ENCODE measurements at regions of chr5 and their contacts with region 1.

Region 1: DNA sequence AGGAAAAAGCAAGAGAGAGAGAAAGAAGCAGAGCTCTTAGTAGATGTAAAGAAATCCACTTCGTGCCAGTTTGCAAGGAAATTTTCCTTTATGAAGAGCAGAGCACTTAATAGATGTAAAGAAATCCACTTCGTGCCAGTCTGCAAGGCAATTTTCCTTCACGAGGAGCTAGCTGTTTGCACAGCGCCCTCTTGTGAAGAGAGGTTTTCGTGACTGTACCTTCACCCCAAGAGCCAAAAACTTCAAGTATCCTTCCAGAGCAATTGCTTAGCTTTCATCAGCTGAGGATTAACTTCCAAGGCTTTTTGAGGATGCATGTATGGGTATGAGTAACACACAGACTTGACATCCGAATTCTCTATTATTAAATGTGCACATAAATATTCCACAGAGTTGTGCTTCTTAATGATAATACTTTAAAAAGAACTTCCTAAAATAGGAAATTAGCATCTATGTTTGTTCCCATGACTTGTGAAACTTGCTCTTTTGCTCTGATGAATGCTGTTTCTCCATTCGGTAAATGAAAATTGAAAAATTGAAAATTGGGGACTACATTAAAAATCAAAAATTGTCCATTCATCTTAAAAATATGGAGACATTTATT is 525.6 kb downstream of the PDE4D start:
- DNase-seq: peak in 4 of 5 donors; percentile 34 to 68 (median 59)
- ATAC-seq: peak; percentile 48 to 79 (median 71)
- H3K4me3 ChIP-seq: no peak overlapping the region
- H3K27ac ChIP-seq: no peak overlapping the region
- H3K4me1 ChIP-seq: peaks cover 0 to 12% (median 0%) of the 10 kb centered on the region in 12 donors
- H3K27me3 ChIP-seq: no peaks in the 10 kb centered on the region
- CTCF ChIP-seq: peak; percentile 65 to 86 (median 80)
- POLR2A ChIP-seq: no peak

Region 2: DNA sequence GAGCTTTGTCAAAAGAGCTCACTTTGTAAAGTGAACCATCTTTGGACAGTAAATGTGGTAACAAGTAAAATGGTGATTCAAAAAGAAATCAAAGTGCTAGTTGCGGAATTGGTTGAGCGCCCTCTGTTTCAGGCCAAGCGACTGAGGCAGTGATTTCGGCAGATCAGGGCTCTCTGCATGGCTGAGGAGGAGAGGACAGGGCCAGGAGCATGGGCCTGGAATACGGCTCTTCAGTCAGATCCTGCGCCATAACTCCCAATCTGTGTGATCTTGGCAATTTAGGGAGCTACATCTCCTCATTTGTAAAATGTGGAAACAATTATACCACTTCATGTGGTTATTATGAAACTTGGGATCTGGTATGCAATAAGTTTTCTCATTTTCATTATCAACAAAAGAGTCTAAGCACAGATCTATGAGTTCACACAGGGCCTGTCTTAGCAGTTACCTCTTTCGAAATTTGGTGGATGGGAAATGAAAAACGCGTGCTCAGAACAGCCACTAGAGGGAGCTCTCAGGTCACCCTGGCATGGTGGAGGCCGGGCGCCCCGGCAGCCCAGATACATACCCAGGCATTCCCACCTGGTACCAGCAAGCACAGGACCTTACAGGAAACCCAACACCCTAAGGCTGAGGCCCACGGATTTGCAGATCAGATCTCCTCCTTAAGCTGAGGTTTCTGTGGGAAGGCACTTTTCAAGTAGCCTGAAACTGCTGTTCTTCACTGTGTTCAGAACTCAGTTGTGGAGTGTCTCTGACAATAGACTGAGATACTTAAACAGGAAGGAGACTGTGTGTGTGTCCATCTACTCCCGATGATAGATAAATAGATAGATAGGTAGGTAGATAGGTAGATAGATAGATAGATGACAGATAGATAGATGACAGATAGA is 481.3 kb before region 1 on chr5:
- intact Hi-C with region 1: loop called in 5 of 10 experiments (anchors 5 to 10 kb)
- DNase-seq: peak; percentile 39 to 72 (median 58)
- ATAC-seq: peak; percentile 45 to 76 (median 60)
- H3K4me3 ChIP-seq: no peak overlapping the region
- H3K27ac ChIP-seq: no peak overlapping the region
- H3K4me1 ChIP-seq: peaks cover 0 to 29% (median 2%) of the 10 kb centered on the region in 12 donors
- H3K27me3 ChIP-seq: no peaks in the 10 kb centered on the region
- CTCF ChIP-seq: peak; percentile 78 to 94 (median 86)
- POLR2A ChIP-seq: no peak

Region 3: DNA sequence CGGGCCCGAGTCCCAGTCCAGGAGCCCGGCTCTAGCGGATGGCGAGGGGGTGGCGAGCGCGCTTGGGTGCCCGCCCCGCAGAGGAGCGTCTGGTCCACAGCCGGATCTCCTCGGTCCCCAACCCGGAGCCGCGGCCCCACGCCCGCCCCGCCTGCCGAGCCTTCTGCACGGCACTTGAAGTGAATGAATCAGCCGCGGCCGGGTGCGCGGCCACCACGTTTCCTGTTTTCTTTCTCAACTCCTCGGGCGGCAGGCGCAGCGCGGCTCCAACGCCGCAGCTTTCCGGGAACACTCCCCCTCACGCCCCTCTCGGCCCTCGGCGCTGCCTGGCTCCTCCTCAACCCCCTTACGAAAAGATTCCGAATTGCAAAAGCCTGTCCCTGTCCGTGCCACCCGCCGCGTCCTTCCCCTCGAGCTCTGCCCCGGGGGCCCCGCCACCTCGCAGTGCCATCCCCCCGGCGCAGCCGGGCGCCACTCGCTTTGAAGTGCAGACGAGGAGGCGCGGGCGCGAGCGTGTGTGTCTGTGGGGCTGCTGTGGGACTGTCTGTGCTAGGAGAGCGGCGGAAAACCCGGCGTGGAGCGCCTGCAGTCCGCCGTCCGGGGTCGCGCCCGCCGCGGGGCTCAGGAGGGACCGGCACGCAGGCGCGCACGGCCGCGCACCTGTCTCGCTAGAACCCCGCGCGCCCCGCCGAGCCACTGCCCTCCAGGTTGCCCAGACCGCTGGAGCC is 328.4 kb before region 1 on chr5:
- intact Hi-C with region 1: loop called in 2 of 10 experiments (anchors 10 kb)
- DNase-seq: peak; percentile 60 to 93 (median 84)
- ATAC-seq: peak; percentile 29 to 79 (median 74)
- H3K4me3 ChIP-seq: peak overlapping the region; percentile 48 to 92 (median 74)
- H3K27ac ChIP-seq: peak overlapping the region; percentile 42 to 91 (median 78)
- H3K4me1 ChIP-seq: peaks cover 0 to 60% (median 29%) of the 10 kb centered on the region in 12 donors
- H3K27me3 ChIP-seq: no peaks in the 10 kb centered on the region
- CTCF ChIP-seq: no peak
- POLR2A ChIP-seq: peak in 1 of 2 donors; percentile 55

Region 4: DNA sequence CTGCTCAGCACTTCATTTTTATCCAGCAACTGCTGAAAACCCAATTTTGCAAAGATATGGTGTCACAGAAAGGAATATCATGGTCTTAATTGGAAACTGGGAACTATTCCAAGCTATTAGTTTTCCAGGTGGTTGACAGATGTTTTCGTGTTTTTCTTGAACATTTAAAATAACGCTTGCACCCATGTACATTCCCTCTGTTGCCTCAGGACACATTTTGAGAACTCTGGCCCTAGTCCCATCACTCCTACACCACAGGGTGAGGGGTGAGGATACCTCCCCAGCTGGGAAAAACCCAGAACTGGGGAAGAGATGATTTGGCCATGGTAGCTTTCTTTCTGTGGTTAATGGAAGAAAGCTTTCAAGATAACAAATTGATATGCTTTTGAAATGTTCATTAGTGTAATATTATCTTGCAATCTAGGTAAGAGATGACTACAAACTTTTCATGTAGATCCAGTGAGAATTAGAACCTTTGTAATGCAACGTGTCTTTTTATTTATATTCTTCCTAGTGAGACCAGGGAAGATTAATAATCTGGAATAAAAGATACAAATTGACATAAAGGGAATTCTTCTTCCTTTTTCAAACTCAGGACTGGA is 158.0 kb before region 1 on chr5:
- intact Hi-C with region 1: loop called in 6 of 10 experiments (anchors 5 kb)
- DNase-seq: no peak
- ATAC-seq: peak in 3 of 4 donors; percentile 27 to 63 (median 40)
- H3K4me3 ChIP-seq: no peak overlapping the region
- H3K27ac ChIP-seq: peak overlapping the region in 1 of 12 donors; percentile 73
- H3K4me1 ChIP-seq: peaks cover 0 to 28% (median 12%) of the 10 kb centered on the region in 12 donors
- H3K27me3 ChIP-seq: no peaks in the 10 kb centered on the region
- CTCF ChIP-seq: no peak
- POLR2A ChIP-seq: no peak

Region 5: GRCh38 chr5:59275510-59276324 is 92.2 kb before region 1 on chr5:
- intact Hi-C with region 1: loop called in 3 of 10 experiments (anchors 5 to 10 kb)
- DNase-seq: peak in 4 of 5 donors; percentile 51 to 57 (median 51)
- ATAC-seq: peak; percentile 76 to 89 (median 85)
- H3K4me3 ChIP-seq: peak overlapping the region in 11 of 12 donors; percentile 26 to 65 (median 52)
- H3K27ac ChIP-seq: peak overlapping the region; percentile 26 to 86 (median 74)
- H3K4me1 ChIP-seq: peaks cover 0 to 29% (median 12%) of the 10 kb centered on the region in 12 donors
- H3K27me3 ChIP-seq: no peaks in the 10 kb centered on the region
- CTCF ChIP-seq: no peak
- POLR2A ChIP-seq: no peak